ENCODE measurements at regions of chr16 and their contacts with region 1.

Region 1: DNA sequence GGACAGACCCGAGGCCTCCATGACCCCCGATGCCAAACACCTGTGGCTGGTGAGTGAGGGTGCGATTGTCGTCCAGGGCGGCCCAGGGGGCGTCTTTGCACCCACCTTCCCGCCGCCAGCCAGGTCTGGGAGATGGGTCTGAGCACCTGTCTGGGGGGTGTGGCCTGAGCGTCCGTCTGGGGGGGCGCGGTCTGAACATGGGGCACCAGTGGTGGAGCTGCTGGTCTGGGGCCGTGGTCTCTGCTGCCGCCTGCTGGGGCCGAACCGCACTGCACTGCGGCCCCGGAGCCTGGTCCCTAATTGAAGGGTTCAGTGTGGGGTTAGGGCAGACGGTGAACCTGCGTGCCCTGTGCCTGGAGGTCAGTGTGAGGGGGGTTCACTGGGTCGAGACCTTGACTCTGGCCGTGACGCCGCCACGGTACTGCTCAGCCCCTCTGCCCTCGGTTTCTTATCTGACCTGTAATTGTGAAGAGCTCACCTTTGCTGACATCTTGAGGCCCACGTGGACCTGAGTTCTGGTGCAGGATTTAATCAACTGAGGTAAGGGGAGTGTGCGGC is 12.6 kb upstream of the TCF25 start:
- DNase-seq: peak; percentile 63 to 85 (median 74)
- ATAC-seq: peak; percentile 84 to 89
- H3K4me3 Mint-ChIP-seq: peak overlapping the region in 2 of 10 donors; percentile 17 to 34
- H3K27ac Mint-ChIP-seq: peak overlapping the region in 6 of 10 donors; percentile 8 to 85 (median 72)
- H3K4me1 Mint-ChIP-seq: peaks cover 18 to 40% (median 36%) of the 10 kb centered on the region in 4 donors
- H3K27me3 Mint-ChIP-seq: no peaks in the 10 kb centered on the region

Region 2: DNA sequence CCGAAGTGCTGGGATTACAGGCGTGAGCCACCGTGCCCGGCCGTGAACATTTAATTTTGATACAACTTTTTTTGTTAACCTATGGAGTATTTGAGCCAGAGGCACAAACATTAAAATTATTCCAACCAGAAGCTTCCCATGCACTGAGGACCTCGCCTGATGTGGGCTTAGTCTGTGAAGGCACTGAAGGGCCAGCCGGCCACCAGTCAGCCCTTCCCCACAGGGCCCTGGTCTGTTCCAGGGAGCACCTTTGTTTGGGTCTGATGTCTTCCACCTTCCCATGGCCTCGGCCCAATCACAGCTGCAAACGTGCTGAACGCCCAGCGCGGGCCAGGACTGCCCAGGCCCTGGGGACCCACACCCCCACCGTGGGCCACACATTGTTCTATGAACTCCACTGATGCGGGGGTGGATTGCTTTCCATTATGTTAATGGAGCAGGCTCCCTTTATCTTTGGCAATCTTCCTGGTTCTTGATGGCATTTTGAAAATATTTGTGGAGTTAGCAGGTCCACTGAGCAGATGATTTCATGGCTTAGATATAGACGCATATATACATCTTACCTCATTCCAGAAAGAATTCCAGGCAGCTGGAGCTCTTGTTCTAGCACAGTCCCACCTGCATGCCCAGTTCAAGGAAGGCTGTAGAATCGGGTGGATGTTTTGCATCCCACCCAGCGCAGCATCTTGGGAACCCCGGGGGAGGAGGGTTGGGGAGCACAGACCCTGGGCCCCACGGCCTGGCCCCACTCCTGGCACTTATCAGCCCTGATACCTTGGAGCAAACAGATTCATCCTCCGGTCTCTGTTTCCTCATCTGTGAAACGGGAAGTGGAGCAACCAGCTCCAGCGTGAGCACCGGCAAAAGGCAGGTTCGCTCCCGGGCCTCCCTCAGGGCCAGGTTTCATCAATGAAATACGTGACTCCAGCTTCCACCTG is 18.1 kb before region 1 on chr16:
- POLR2A ChIA-PET with region 1: interaction called, 13 read pairs
- DNase-seq: no peak
- ATAC-seq: no peak
- H3K4me3 Mint-ChIP-seq: no peak overlapping the region
- H3K27ac Mint-ChIP-seq: peak overlapping the region in 3 of 10 donors; percentile 4 to 34 (median 9)
- H3K4me1 Mint-ChIP-seq: peaks cover 0 to 36% (median 24%) of the 10 kb centered on the region in 4 donors
- H3K27me3 Mint-ChIP-seq: no peaks in the 10 kb centered on the region

Region 3: DNA sequence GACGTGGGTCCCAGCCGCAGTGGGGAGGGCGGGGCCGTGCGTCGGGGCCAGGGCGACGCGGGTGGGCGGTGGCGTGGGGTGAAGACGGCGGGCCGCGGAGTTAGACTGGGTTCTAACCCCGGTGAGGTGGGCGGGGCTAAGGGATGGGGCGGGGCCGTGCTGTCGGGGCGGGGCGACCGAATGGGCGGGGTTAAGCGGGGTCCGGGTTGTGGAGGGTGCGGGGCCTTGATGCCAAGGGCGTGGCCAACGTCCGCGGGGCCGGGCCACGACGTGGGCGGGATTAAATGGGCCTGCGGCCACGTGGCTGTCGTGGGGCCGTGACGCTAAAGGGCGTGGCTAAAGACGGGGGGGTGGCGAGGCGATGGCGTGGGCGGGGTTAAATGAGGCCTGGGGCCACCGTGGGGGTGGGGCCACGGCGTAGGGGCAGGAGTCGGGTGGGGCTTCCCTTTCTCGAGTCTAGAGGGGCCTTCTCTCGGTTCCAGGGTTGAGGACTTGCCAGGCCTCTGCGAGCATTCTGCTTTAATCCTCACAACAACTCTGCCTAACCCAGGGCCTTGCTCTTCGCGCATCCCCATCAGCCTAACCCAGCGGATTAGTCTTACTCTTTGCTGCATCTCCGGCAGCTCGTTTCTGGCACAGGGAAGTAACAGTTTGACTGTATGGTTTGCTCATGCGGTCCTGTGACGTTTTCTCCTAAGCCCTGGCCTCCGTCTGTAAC is 13.3 kb after region 1 on chr16:
- POLR2A ChIA-PET with region 1: interaction called, 86 read pairs
- DNase-seq: peak; percentile 89 to 96 (median 92)
- ATAC-seq: peak; percentile 70 to 82
- H3K4me3 Mint-ChIP-seq: peak overlapping the region; percentile 83 to 96 (median 91)
- H3K27ac Mint-ChIP-seq: peak overlapping the region; percentile 63 to 99 (median 98)
- H3K4me1 Mint-ChIP-seq: peaks cover 3 to 26% (median 21%) of the 10 kb centered on the region in 4 donors
- H3K27me3 Mint-ChIP-seq: no peaks in the 10 kb centered on the region

Region 4: DNA sequence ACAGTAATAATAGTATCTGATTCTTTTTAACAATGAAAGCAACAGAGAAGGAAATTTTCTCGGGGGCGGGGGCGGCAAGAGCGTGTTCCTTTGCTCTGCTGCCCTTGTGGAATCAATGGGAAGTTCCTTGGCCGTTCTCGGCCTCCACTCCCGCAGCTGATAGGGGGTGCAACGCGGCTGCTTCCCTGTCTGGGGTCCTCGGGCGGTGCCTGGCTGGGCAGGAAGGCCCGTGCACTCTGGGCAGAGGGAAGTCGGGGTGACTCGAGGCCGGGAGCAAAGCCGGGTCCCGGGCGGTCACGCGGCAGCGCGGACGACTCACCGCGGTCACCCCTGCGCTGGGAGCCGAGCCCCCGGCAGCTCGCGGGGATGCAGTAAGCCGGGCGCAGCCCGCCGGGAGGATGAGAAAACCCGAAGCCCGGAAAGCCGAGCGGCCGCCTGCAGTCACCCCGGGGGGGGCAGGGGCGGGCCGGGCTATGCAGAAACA is 64.8 kb after region 1 on chr16:
- POLR2A ChIA-PET with region 1: no interaction called
- DNase-seq: no peak
- ATAC-seq: no peak
- H3K4me3 Mint-ChIP-seq: peak overlapping the region in 8 of 10 donors; percentile 27 to 65 (median 34)
- H3K27ac Mint-ChIP-seq: no peak overlapping the region
- H3K4me1 Mint-ChIP-seq: peaks cover 5 to 32% (median 18%) of the 10 kb centered on the region in 4 donors
- H3K27me3 Mint-ChIP-seq: peaks cover 5 to 65% (median 19%) of the 10 kb centered on the region in 5 donors

Region 5: GRCh38 chr16:89953671-89954419 is 93.0 kb after region 1 on chr16:
- POLR2A ChIA-PET with region 1: no interaction called
- DNase-seq: peak in 1 of 10 donors; percentile 52
- ATAC-seq: no peak
- H3K4me3 Mint-ChIP-seq: peak overlapping the region in 1 of 10 donors; percentile 19
- H3K27ac Mint-ChIP-seq: no peak overlapping the region
- H3K4me1 Mint-ChIP-seq: peaks cover 3 to 45% (median 7%) of the 10 kb centered on the region in 4 donors
- H3K27me3 Mint-ChIP-seq: no peaks in the 10 kb centered on the region